Astrocyte of the cerebellum (primary cell): ENCODE measurements at regions of chr1 and their contacts with region 1.

Region 1: GRCh38 chr1:108646648-108647269 is 14.1 kb downstream of the HENMT1 start:
- DNase-seq: peak; percentile 53
- H3K4me3 ChIP-seq: no peak overlapping the region
- CTCF ChIP-seq: no peak

Region 2: DNA sequence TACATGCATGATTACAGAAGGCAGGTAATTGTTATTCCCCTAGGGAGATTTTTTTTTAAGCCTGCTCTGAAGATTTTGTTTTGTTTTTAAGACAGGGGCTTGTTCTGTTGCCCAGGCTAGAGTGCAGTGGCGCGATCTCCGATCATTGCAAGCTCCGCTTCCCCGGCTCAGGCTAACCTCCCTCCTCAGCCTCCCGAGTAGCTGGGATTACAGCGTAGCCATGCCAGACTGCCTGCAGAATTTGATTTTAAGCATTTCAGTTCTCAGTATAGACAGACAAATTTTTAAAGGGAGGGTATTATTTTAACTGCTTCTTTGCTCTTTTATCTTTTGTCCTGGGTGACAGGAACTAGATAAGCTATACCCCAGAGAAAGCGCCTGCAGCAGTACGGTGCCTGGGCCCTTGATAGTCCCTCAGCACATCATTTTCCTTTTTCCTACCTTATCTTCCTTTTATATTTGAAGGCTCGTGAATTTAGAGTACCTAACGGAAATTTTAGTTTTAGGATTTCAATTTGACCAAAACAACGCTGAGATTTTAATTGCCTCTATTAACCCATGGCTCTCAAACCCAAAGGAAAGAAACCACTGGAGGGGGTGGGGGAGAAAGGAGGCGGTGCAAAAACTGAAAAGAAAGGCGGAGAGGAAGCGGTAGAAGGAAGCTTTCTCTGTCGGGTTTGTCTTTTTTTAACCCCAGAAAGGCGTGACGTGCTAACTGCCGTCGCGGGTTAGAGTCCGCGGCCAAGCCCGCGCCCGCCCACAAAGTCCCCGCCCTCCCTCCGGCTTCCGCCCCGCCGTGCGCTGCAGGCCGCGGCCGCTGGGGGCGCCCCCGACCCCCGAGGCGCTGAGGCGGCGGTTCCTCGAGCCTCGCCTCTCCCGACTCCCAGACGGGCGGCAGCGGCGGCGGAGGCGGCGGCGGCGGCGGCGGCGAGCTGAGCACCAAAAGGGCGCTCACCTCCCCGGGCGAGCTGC is 87.3 kb before region 1 on chr1 and contains the start of gene EEIG2:
- in situ Hi-C with region 1: loop called (anchors 5 kb)
- DNase-seq: peak; percentile 62
- H3K4me3 ChIP-seq: peak within 1 kb of the TSS; percentile 56
- CTCF ChIP-seq: peak; percentile 59